PC-3 (cell line): ENCODE measurements at regions of chr5 and their contacts with region 1.

Region 1: GRCh38 chr5:217860-218456 is at the starts of genes CCDC127 and SDHA:
- DNase-seq: peak; percentile 95
- ATAC-seq: peak; percentile 68
- H3K4me3 ChIP-seq: peak within 1 kb of the TSS; percentile 93
- H3K27ac ChIP-seq: peak within 1 kb of the TSS; percentile 66
- H3K4me1 ChIP-seq: peaks cover 39% of the 10 kb centered on the region
- H3K27me3 ChIP-seq: no peaks in the 10 kb centered on the region
- CTCF ChIP-seq: peak; percentile 58
- total RNA-seq, gene CCDC127: 4.1 and 5.4 TPM in 2 replicates
- total RNA-seq, gene SDHA: 163 and 181 TPM in 2 replicates

Region 2: GRCh38 chr5:53281-54174 is 164.4 kb before region 1 on chr5:
- CTCF ChIA-PET with region 1: no interaction called
- POLR2A ChIA-PET with region 1: interaction called, 11 read pairs
- intact Hi-C with region 1: no loop called
- DNase-seq: peak; percentile 65
- ATAC-seq: peak; percentile 94
- H3K4me3 ChIP-seq: peak overlapping the region; percentile 72
- H3K27ac ChIP-seq: no peak overlapping the region
- H3K4me1 ChIP-seq: no peaks in the 10 kb centered on the region
- H3K27me3 ChIP-seq: no peaks in the 10 kb centered on the region
- CTCF ChIP-seq: peak; percentile 25; the same call in 1 of the 2 replicates

Region 3: DNA sequence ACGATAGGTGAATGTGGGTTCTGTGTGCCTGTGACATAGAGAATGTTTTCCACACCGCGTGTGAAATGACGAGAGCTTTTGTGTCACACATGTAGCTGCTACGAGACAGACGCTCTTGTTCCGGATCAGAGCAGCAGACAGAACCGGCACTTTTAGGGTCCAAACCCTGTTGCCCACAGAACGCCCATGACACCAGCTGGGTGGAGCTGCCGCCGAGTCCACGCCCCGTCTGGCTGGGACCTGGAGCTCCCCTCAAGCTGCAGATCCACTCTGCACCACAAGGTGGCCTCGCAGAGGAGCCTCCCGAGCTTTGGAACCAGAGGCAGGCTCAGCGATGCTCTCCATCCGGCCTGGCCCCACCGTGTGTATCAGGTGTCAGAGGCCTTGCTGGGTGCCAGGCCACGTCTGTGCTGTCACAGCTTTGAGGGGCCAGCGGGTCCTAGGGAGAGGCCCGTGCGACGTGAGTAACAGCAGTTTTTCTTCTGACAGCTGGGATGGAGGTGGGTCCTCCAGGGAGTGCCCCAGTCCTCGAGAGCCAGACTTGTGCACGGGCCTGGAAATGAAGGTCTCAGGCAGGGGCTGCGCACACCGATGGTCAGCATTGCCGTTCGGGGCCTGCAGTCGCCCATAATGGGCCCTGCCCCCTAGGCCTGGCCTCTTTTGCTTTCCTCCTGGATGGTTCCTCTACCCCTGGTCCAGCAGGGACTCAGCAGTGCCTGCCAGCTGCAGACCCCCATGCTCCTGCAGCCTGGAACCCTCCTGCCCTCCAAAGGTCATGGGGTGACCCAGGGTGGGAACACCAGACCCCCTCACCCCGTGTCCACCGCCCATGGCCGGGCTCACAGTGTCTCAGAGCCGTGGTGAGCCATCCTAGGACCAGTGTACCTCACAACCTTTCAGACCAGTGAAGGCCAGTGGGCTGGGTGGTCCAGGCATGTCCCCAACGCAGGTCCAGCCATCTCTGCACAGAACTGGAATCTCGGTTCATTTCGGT is 29.2 kb before region 1 on chr5:
- CTCF ChIA-PET with region 1: interaction called, 12 read pairs
- POLR2A ChIA-PET with region 1: no interaction called
- intact Hi-C with region 1: no loop called
- DNase-seq: peak; percentile 91
- ATAC-seq: peak; percentile 94
- H3K4me3 ChIP-seq: peak overlapping the region; percentile 51
- H3K27ac ChIP-seq: no peak overlapping the region
- H3K4me1 ChIP-seq: peaks cover 11% of the 10 kb centered on the region
- H3K27me3 ChIP-seq: no peaks in the 10 kb centered on the region
- CTCF ChIP-seq: peak; percentile 87

Region 4: DNA sequence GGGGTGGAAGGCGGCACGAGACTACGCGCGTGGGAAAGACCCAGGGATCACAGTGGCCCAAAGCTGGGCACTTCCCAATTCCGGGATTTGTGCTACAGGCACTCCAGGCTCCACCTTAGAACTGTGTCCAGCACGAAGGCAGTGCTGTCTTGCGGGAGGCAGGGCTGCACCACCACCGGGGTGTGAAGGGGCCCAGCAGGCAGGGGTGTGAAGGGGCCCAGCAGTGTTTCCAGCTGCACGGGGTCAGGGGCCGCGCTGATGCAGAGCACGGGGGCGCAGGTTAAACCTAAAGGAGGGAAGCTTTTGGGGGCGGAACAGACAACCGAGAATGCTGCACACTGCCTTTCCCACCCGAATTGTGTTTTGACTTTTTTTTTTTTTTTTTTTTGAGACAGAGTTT is 52.4 kb after region 1 on chr5:
- CTCF ChIA-PET with region 1: interaction called, 3 read pairs
- POLR2A ChIA-PET with region 1: interaction called, 3 read pairs
- intact Hi-C with region 1: loop called (anchors 5 kb)
- DNase-seq: no peak
- ATAC-seq: no peak
- H3K4me3 ChIP-seq: peak overlapping the region; percentile 66; the same call in 1 of the 2 replicates
- H3K27ac ChIP-seq: peak overlapping the region; percentile 64; the same call in 1 of the 2 replicates
- H3K4me1 ChIP-seq: peaks cover 19% of the 10 kb centered on the region
- H3K27me3 ChIP-seq: no peaks in the 10 kb centered on the region
- CTCF ChIP-seq: no peak

Region 5: DNA sequence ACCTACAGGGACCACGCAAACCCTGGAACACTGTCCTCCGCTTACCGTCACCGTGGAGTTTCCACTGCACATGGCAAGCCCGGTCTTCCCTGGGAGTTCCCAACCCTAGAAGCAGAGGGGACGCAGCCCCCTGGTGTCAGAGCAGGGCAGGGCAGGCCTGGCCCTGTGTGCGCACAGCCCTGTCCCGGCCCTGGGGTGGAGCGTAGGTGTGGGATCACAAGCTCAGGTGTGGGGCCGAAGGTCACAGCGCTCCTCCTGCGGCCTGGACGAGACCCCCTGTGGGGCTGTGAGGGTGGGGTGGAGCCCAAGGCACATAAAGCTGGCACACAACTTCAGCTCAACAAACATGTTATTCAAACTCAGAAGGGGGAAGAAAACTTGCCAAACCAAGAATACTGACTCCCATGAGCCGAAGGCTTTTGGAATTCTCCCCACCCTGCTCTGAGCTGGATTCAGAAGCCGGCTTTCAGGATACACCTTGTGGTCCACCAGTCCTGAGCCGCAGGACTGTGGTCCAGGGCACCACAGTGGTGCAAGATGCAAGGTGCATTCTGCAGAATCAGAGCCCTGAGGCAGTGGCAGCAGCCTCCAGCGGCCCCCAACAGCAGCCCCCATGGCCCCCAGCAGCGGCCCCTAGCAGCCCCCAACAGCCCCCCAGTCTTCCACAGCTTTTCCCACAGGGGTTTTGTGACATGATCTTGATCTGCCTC is 213.2 kb after region 1 on chr5:
- CTCF ChIA-PET with region 1: no interaction called
- POLR2A ChIA-PET with region 1: no interaction called
- intact Hi-C with region 1: no loop called
- DNase-seq: peak; percentile 62
- ATAC-seq: peak; percentile 98
- H3K4me3 ChIP-seq: no peak overlapping the region
- H3K27ac ChIP-seq: no peak overlapping the region
- H3K4me1 ChIP-seq: no peaks in the 10 kb centered on the region
- H3K27me3 ChIP-seq: no peaks in the 10 kb centered on the region
- CTCF ChIP-seq: peak; percentile 83